Lower leg skin (tissue), 4 donors: ENCODE measurements at regions of chr2 and their contacts with region 1.

Region 1: GRCh38 chr2:218269899-218270720 is at the starts of genes AAMP and PNKD:
- DNase-seq: peak; percentile 100
- H3K4me3 ChIP-seq: peak within 1 kb of the TSS; percentile 73
- CTCF ChIP-seq: no peak
- POLR2A ChIP-seq: peak in 1 of 2 donors; percentile 31
- total RNA-seq, gene AAMP: 142 to 171 (median 151) TPM
- total RNA-seq, gene PNKD: 26.6 to 60.6 (median 43.3) TPM

Region 2: DNA sequence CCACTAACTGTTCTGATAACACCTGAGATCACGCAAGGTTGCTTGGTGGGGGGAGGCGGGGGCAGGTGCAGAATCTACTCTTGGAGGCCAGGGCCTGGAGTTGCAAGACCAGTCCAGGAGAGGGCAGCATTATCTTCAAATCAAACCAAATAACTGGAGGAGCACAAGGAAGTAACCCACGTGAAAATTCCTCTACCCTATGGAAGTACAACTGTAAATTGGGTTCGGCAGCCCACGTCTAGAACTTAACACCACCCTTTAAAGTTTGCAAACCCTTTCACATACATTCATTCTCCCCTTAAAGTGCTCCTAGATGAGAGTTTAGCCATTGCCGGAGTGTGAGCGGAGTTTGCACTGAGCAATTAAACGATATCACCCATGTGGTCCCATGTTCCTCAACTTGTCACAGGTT is 83.7 kb before region 1 on chr2:
- intact Hi-C with region 1: loop called (anchors 10 kb)
- DNase-seq: peak; percentile 70 to 84
- H3K4me3 ChIP-seq: no peak overlapping the region
- CTCF ChIP-seq: peak in 1 of 3 donors; percentile 84
- POLR2A ChIP-seq: no peak

Region 3: GRCh38 chr2:218395797-218396687 is 125.9 kb after region 1 on chr2:
- intact Hi-C with region 1: loop called (anchors 10 kb)
- DNase-seq: peak; percentile 88 to 98
- H3K4me3 ChIP-seq: peak overlapping the region; percentile 59
- CTCF ChIP-seq: peak in 1 of 3 donors; percentile 85
- POLR2A ChIP-seq: no peak

Region 4: GRCh38 chr2:218547978-218548377 is 277.9 kb after region 1 on chr2:
- intact Hi-C with region 1: no loop called
- DNase-seq: no peak
- H3K4me3 ChIP-seq: no peak overlapping the region
- CTCF ChIP-seq: no peak
- POLR2A ChIP-seq: no peak